ENCODE measurements at regions of chr7 and their contacts with region 1.

Region 1: GRCh38 chr7:55550010-55550663 is 22.2 kb downstream of the VOPP1 start:
- DNase-seq: no peak
- H3K4me3 ChIP-seq: no peak overlapping the region
- H3K4me3 Mint-ChIP-seq: no peak overlapping the region
- H3K27ac Mint-ChIP-seq: peak overlapping the region; percentile 71
- H3K4me1 ChIP-seq: peaks cover 9% of the 10 kb centered on the region; the same call in 1 of the 2 replicates
- H3K4me1 Mint-ChIP-seq: peaks cover 9% of the 10 kb centered on the region
- H3K27me3 ChIP-seq: no peaks in the 10 kb centered on the region
- H3K27me3 Mint-ChIP-seq: no peaks in the 10 kb centered on the region
- CTCF ChIP-seq: no peak

Region 2: DNA sequence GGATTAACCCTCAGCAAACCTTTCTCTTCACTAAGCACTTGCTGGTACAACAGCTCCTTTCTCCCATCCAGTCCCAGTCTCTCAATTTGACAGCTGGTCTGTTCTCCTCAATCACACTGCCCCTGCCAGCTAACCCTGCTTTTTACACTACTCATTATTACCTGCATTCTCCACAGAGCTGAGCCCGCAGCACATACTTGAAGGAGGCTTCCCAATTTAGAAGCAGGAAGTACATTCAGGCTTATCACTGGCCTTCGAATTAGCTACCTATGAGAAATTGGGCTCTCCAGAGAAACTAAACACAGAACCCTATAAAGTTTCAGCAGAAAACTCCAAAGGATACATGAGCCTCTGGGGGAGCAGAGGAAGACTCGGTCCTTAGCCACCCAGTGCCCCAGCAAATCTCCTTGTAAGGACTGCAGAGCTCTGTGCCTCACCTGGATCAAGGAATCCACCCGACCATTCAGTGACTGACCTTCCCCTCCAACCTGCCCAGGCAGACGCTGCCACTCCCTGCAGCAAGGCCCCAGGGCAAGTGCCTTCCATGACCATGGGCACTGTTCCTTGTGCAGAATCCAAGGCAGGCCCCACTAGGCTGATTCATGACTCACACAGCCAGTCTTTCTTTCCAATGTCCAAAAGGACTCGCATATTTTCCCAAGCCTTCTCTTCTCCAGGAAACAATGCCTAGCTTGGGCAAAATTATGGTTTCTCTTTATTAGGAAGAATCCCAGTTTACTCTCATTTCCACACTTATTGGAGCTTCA is 45.9 kb before region 1 on chr7:
- CTCF ChIA-PET with region 1: no interaction called
- POLR2A ChIA-PET with region 1: no interaction called
- intact Hi-C with region 1: no loop called
- DNase-seq: no peak
- H3K4me3 ChIP-seq: no peak overlapping the region
- H3K4me3 Mint-ChIP-seq: no peak overlapping the region
- H3K27ac Mint-ChIP-seq: no peak overlapping the region
- H3K4me1 ChIP-seq: no peaks in the 10 kb centered on the region
- H3K4me1 Mint-ChIP-seq: no peaks in the 10 kb centered on the region
- H3K27me3 ChIP-seq: no peaks in the 10 kb centered on the region
- H3K27me3 Mint-ChIP-seq: no peaks in the 10 kb centered on the region
- CTCF ChIP-seq: no peak

Region 3: DNA sequence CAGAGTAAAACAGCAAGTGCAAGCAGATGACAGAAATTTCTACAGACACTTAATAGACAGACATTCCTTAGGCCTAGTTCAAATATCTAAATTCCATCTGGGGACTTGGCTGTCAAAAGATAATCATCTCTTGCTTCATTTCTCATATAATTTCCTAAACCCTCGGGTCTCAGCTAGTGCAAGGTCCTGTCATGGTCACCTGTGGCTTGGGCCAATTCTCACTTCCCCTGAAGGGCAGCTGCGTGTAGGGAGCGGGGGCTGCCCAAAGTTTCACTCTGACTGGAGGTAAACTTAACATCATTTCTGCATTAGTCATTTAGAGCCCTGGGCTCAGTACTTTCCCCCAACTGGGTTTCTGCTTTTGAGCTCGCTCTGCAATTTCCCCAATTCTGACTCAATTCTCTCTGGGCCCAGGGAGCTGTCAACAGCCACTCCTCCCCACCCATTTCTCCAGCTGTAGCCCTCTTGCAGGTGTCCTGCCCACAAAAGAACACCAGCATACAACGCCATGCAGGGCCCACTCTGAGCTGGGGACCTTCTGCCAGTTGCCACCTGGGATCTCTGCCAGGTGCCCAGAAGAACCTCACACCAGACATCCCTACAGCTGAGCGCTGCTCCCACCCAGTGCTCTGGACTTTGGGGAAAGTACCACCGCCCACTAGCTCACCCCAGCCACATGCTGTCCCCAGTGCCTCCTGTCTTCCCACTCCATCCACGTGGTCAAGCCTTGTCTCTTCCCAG is 15.8 kb before region 1 on chr7:
- CTCF ChIA-PET with region 1: no interaction called
- POLR2A ChIA-PET with region 1: no interaction called
- intact Hi-C with region 1: loop called (anchors 2 kb)
- DNase-seq: peak in 1 of 2 experiments; percentile 36
- H3K4me3 ChIP-seq: no peak overlapping the region
- H3K4me3 Mint-ChIP-seq: no peak overlapping the region
- H3K27ac Mint-ChIP-seq: peak overlapping the region; percentile 47
- H3K4me1 ChIP-seq: peaks cover 12% of the 10 kb centered on the region
- H3K4me1 Mint-ChIP-seq: peaks cover 12% of the 10 kb centered on the region
- H3K27me3 ChIP-seq: no peaks in the 10 kb centered on the region
- H3K27me3 Mint-ChIP-seq: no peaks in the 10 kb centered on the region
- CTCF ChIP-seq: no peak

Region 4: DNA sequence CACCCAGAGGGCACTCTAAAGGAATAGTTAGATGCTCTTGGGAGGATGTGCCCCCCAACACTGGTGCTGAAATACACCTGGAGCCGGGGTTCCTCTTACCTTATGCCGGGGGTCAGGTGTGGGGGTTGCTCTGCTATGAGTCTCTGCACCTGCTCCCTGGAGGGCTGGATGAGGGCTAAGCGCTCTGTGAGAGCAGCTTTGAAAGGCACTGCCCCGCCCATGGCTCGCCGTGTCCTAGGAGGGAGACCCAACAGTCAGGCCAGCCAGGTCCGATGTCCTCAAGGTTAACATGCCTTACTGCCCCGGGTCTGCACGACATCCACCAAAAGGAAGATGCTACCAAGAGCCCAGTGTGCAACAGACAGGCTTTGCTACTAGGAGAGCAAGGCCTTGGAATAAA is 469.4 kb after region 1 on chr7:
- CTCF ChIA-PET with region 1: no interaction called
- POLR2A ChIA-PET with region 1: no interaction called
- intact Hi-C with region 1: no loop called
- DNase-seq: no peak
- H3K4me3 ChIP-seq: no peak overlapping the region
- H3K4me3 Mint-ChIP-seq: no peak overlapping the region
- H3K27ac Mint-ChIP-seq: no peak overlapping the region
- H3K4me1 ChIP-seq: peaks cover 19% of the 10 kb centered on the region
- H3K4me1 Mint-ChIP-seq: peaks cover 8% of the 10 kb centered on the region
- H3K27me3 ChIP-seq: no peaks in the 10 kb centered on the region
- H3K27me3 Mint-ChIP-seq: no peaks in the 10 kb centered on the region
- CTCF ChIP-seq: no peak

Measured in Caco-2 (cell line).